ENCODE measurements at regions of chr20 and their contacts with region 1.

Region 1: DNA sequence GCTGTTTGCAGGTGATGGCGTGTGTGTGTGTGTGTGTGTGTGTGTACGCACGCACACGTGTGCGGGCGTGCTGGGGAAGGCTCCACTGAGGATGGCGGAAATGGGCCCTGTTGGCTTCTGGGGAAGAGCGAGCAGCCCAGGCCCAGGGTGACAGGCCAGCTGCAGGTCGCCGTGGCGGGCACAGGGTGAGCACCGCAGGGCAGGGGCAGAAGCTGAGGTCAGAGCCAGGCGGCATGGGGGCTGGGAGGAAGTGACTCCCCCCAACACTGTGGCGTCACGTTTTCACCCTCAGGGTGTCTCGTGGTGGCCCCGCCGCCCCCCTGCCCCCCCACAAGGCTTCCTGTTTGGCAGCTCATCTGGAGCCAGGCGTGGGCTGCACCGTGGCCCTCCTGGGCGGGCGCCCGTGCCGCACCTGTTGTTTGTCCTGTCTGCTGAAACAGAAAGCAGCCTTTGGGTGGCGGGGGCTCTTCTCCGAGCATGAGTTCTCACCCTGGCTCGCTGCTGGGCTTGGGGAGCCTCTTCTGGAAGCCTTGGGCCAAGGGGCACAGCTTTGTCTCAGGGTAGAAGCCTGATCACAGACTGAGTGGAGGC is 7.1 kb downstream of the RBM38 start:
- DNase-seq: peak; percentile 93
- H3K4me3 Mint-ChIP-seq: peak overlapping the region; percentile 78
- H3K27ac Mint-ChIP-seq: peak overlapping the region; percentile 96
- H3K4me1 Mint-ChIP-seq: peaks cover 88% of the 10 kb centered on the region
- H3K27me3 Mint-ChIP-seq: no peaks in the 10 kb centered on the region

Region 2: DNA sequence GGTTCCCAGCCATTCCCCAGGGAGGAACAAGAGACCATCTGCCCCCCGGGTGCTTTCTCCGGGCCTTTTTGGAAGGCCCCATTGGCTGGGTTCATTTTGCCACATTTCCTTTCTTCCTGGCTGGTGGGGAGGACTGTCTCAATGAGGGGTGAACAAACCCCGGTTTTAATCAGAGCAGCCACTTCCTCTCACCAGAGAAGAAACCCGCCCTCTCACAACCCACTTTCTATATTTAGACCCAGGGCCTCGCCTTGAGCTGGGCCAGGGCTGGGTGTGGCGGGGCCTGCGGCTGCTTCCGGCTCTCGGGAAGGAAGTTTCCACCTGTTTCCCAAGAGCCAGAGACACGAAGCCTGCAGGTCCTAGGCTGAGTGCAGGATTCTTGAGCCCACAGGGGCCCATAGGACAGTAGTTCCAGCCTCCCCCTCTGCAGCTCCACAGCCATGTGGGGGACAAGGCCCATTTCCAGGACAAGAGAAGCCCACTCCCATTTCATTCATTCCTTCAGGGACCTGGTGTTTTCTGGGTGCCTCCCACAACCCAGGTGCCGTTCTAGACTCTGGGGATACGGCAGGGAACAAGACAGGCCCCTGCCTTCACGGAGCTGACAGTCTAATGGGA is 34.7 kb after region 1 on chr20:
- CTCF ChIA-PET with region 1: interaction called, 6 read pairs
- POLR2A ChIA-PET with region 1: interaction called, 17 read pairs
- intact Hi-C with region 1: loop called (anchors 2 kb)
- DNase-seq: peak; percentile 84
- H3K4me3 Mint-ChIP-seq: peak overlapping the region; percentile 48
- H3K27ac Mint-ChIP-seq: peak overlapping the region; percentile 83
- H3K4me1 Mint-ChIP-seq: peaks cover 55% of the 10 kb centered on the region
- H3K27me3 Mint-ChIP-seq: no peaks in the 10 kb centered on the region